AG04449 (cell line): ENCODE measurements at regions of chr10 and their contacts with region 1.

Region 1: DNA sequence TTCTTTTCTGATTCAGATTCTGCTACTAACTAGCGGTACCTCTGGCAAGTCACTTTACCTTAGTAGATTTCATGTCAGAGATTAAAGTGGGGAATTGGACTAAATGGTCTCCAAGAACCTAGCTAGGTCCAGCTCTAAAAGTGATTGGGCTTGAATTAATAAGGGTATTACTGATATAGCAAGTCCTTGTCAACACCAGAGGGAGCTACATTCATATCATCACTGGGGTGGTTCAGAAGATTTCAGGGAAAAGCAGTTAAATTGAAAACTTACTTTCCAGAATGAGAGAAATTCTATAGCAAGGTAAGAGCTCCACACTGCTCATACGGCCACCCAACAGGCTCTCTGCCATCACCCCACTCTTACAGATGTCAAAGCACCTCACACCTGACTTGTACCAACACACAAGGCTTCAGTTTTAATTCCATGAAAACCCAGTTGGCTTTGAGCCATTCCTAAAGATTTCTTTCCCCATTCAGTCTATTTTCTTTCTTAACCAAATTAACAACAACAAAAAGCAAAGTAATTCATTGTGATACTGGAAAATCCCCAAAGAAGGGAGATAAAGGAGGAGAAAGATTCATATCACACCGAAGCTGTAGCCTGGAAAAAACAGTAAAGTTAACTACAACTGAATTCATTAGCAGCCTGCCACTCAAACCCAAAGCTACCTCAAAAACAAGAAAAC is 38.0 kb upstream of the SPOCK2 start:
- DNase-seq: peak; percentile 4
- H3K4me3 ChIP-seq: no peak overlapping the region
- CTCF ChIP-seq: peak; percentile 35

Region 2: DNA sequence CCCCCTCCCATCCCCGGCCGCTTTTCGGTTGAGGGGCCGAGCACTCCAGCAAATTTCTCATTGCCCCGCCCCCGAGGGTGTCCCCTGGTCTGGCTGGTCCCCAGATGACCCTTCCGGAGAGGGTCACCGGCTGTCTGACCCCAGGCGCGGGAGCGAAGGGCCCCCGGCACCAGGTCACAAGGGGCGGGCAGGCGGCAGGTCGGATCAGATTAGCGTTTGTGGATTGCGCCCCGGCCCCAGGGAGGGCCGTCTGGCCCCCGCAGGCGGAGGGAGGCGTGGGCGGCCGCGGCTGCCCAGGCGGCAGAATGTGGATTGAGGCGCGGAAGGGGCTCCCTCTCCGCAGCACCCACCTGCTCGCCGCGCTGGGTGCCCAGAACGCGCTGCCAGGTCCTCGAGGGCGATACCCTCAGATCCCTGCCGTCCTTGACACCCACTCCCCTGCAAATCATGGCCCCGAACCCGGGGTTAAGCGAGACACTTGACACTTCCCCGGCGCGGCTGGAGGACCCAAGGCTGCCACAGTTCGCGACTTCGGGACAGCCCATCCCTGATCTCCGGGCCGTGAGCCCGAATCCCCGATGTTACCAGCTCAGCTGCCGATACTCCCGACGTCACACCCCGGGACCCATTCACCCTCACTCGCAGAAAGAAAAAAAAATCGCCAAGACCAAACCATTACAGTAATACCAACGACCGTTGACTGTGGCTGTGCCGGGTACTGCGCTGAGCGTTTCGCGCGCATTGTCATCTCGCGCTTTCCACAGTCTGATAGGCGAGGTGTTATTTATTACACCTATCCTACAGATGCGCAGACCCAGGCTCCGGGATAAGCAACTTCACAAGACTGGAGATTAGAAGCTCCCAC is 1685.8 kb before region 1 on chr10:
- CTCF ChIA-PET with region 1: no interaction called
- POLR2A ChIA-PET with region 1: no interaction called
- DNase-seq: no peak
- H3K4me3 ChIP-seq: no peak overlapping the region
- CTCF ChIP-seq: no peak

Region 3: DNA sequence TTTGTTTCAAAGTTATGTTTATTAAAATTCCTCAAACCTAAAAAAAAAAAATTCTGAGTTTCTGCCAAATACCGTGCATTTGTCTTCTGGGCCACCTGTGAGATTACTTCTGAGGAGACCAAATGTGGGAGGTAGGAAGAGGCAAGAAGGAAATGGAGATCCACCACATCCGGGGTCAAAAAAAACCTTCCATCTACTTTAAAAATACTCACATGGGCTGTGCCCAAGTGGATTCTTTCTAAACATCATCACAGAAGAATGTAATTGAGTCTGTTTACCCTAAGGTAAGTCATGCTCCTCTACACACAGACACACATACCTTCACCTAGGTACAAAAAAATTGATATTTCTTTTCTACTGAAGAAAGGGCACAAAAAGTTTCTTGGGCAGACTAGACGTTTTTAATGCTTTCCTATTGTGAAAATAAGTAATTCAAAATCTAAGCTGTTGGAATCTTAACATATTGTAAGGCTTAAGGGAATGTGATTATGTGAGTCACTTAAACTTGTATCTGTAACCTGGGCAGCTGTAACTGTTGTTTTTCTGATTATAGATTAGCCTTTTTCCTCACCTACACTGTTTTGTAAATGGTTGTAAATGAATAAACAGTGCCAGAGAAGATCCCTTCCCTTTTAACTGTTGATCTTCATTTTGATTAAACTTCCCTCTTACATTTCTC is 18.9 kb before region 1 on chr10:
- CTCF ChIA-PET with region 1: interaction called, 62 read pairs
- POLR2A ChIA-PET with region 1: no interaction called
- DNase-seq: no peak
- H3K4me3 ChIP-seq: no peak overlapping the region
- CTCF ChIP-seq: no peak

Region 4: GRCh38 chr10:72156223-72156622 is 29.9 kb after region 1 on chr10:
- CTCF ChIA-PET with region 1: interaction called, 11 read pairs
- POLR2A ChIA-PET with region 1: no interaction called
- DNase-seq: no peak
- H3K4me3 ChIP-seq: no peak overlapping the region
- CTCF ChIP-seq: no peak

Region 5: DNA sequence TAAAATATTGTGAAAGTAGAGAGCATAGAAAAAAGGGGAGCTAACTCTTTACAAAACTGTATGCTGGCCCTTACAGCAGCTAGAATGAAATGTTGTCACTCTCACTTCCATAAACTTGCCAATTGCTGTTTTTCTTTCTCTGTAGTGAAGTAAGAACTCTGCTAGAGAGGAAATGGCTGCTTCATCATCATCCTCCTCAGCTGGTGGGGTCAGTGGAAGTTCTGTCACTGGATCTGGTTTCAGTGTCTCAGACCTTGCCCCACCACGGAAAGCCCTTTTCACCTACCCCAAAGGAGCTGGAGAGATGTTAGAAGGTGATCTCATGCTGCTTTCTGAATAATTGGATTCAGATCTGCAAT is 97.4 kb after region 1 on chr10:
- CTCF ChIA-PET with region 1: interaction called, 77 read pairs
- POLR2A ChIA-PET with region 1: no interaction called
- DNase-seq: no peak
- H3K4me3 ChIP-seq: no peak overlapping the region
- CTCF ChIP-seq: no peak

Region 6: DNA sequence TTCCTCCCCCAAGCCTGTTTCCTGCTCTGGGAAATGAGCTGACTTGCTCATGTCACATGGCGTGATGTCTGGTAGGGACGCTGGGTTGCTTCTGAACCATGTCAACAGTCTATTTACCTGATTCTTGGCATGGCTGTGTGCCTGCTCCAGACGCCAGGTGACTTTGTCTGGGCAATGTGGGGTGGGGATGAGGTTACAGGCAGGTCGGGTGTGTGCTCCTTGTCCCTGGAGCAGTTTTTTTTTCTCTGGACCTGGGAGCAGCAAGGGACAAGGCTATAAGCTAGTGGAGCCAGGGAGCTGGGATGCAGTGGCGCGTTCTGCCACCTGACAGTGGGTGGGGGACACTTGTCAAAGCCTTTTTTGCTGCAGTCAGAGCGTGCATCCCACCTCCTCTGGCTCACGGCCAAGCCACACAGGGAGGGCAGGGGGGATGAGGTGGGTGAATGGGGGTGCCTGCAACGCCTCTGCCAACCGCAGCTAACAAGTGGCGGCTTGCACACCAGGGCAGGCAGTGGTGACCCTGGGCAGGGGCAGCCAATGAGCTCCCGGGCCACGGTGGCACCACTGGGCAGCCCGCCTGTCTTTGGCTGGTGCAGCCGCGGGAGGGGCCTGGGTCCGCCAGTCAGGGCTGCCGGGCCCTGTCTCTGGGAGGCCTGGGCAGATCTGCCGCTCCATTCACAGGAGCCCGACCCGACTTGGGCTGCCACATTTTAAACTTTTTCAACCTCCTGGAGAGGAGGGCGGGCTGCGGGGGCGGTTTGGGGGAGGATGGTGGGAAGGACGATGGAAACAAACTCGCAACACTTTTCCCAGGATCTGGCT is 205.5 kb after region 1 on chr10:
- CTCF ChIA-PET with region 1: interaction called, 29 read pairs
- POLR2A ChIA-PET with region 1: no interaction called
- DNase-seq: no peak
- H3K4me3 ChIP-seq: no peak overlapping the region
- CTCF ChIP-seq: peak; percentile 7

Region 7: DNA sequence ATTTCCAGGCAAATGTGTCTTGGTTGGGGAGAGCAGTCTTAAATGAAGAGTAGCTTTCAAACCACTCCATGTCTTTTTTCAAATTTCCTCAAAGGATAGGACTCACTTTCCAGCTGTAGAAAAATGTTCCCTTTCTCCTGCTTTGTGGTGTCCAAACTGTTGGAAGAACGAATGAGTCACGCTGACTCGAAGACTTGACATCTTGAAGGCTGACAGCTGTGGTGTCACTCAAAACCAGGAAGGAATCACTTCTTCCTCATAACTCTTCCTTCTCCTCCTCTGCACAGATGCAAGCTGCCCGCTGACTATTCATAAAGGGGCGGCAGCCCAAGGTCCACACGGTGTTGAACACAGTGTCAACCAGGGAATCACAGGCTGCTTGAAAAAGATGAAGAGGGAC is 809.0 kb after region 1 on chr10:
- CTCF ChIA-PET with region 1: no interaction called
- POLR2A ChIA-PET with region 1: no interaction called
- DNase-seq: no peak
- H3K4me3 ChIP-seq: no peak overlapping the region
- CTCF ChIP-seq: no peak